Activated naive CD4-positive, alpha-beta T cell treated with anti-CD3 and anti-CD28 coated beads for 36 hours (primary cell): ENCODE measurements at regions of chr4 and their contacts with region 1.

Region 1: DNA sequence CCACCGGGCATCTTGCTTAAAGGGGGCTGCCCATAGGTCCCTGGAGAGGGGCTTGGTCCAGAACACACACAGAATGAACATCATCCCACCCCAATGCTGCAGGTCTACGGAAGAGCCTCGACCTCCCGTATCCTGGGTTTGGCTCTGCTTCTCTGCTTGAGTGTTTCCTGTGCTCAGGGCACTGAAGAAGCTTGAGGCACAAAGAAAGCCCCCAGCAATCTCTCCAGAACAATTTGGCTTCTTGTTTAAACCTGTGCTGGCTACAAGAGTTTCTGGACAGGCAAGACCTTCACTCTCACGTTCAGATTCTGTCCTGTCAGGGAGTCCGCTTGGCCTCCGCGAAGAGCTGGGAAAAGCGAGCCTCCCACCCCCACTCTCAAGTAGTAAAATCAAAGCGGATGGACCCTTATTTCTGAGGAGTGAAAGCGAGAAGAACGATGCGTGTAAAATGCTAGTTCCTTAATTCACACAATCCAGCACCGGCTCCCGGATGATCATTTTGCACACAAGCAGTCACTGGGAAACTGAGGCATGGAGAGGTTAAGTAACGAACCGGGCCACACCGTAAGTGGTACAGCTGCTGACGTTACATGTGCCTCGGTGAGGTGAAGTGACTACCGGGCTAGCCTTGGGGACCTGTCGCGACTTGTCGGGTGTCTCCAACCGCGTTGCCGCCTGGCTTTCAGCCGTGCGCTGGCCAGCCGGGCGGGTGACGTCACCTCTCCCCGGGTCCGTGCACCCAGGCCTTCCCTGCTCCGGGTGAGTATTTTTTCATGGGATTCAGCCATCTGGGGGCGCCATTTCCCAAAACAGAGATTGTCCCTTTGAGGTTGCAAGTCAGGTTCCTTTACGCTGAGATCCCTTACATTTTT is 3.1 kb upstream of the SFRP2 start:
- DNase-seq: peak; percentile 85
- H3K4me3 Mint-ChIP-seq: peak overlapping the region; percentile 67
- H3K27ac Mint-ChIP-seq: no peak overlapping the region
- H3K4me1 Mint-ChIP-seq: peaks cover 44% of the 10 kb centered on the region
- H3K27me3 Mint-ChIP-seq: peaks cover 79% of the 10 kb centered on the region

Region 2: GRCh38 chr4:152972821-152973628 is 819.0 kb before region 1 on chr4:
- CTCF ChIA-PET with region 1: no interaction called
- intact Hi-C with region 1: no loop called
- DNase-seq: no peak
- H3K4me3 Mint-ChIP-seq: no peak overlapping the region
- H3K27ac Mint-ChIP-seq: no peak overlapping the region
- H3K4me1 Mint-ChIP-seq: no peaks in the 10 kb centered on the region
- H3K27me3 Mint-ChIP-seq: no peaks in the 10 kb centered on the region

Region 3: DNA sequence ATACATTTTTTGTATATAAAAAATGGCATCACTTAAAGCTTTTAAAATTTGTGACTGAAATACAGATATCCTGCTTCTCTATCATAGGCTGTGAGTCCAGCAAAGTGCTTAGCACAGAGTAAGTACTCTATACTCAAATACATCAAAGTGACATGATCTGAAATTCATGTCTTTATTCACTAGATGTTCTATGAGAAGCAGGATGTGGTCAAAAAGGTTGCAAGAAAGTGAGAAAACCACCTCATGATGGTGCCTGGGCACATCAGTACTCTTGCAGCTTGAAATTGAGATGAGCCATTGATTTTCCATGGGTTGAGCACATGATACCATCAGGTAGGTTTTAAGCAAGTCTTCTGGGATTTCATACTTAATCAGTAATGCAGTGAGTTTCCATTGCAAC is 17.3 kb after region 1 on chr4:
- CTCF ChIA-PET with region 1: interaction called, 3 read pairs
- intact Hi-C with region 1: loop called (anchors 1 kb)
- DNase-seq: peak; percentile 59
- H3K4me3 Mint-ChIP-seq: no peak overlapping the region
- H3K27ac Mint-ChIP-seq: no peak overlapping the region
- H3K4me1 Mint-ChIP-seq: peaks cover 17% of the 10 kb centered on the region
- H3K27me3 Mint-ChIP-seq: no peaks in the 10 kb centered on the region

Region 4: DNA sequence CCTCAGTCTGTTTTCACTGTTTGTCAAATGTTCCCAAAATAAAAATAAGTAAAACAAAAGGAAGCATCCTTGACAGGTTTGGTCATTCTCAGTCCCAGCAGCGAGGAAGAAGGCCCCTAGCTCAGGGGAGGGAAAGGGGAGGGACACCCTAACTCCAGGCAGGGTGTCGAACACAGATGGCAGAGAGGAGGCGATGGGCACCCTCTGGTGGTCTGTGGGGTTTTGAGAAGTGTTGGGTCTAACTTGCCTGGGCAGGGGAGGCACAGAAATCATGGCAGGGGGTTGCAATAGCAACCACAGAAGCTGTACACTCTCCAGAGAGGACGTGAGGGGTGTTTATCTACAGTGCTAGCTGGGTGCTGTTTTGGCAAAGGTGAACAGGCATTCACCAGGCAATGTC is 226.7 kb after region 1 on chr4:
- CTCF ChIA-PET with region 1: interaction called, 14 read pairs
- intact Hi-C with region 1: loop called (anchors 1 kb)
- DNase-seq: peak; percentile 57
- H3K4me3 Mint-ChIP-seq: no peak overlapping the region
- H3K27ac Mint-ChIP-seq: no peak overlapping the region
- H3K4me1 Mint-ChIP-seq: no peaks in the 10 kb centered on the region
- H3K27me3 Mint-ChIP-seq: peaks cover 5% of the 10 kb centered on the region

Region 5: DNA sequence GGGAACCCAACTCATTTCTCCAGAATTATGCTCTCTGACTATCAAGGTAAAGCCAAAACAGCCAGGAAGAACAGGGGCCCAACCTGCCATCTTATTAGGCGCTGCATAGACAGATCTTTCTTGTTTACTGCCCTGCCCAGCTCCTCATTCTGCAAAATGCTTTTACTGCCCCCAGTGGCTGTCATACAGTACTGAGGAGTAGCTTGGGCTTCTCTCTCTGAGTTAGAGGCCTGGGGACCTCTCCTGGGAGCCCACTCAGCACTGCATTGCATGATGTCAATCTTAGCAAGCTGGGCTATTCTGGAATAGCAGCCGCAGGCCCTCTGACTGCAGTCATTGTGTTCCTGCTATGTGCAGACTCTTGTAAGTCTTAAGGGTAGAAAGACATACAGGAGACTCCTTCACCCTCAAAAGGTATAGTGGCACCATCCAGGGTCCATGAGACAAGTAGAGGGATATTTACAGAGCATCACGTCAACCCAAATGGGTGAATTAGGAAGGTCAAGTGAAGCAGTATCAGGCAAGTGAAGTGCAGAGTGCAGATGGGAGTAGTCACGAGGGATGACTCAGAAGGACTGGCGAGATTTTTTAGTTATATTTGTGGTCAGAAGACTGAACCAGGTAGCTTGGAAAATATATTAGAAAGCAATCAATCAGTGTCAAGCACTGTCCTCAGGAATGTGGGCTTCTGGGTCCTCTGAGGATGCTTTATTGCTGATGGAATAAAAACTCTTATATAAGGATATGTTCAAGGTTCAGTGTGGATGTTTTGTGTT is 291.0 kb after region 1 on chr4:
- CTCF ChIA-PET with region 1: interaction called, 4 read pairs
- intact Hi-C with region 1: loop called (anchors 5 kb)
- DNase-seq: peak; percentile 22
- H3K4me3 Mint-ChIP-seq: no peak overlapping the region
- H3K27ac Mint-ChIP-seq: no peak overlapping the region
- H3K4me1 Mint-ChIP-seq: no peaks in the 10 kb centered on the region
- H3K27me3 Mint-ChIP-seq: peaks cover 2% of the 10 kb centered on the region

Region 6: DNA sequence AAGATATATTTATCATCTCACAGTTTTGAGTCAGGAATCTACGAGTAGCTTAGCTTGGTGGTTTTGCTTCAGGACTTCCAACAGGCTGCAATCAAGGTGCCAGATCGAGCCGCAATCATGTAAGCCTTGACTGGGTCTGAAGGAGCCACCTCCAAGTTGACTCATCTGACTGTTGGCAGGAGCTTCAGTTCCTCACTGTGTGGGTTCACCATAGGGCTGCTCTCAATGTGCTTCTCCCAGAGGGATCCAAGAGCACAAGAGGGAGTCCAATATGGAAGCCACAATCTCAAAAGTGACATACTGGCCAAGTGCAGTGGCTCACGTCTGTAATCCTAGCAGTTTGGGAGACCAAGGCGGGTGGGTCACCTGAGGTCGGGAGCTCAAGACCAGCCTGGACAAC is 673.1 kb after region 1 on chr4:
- CTCF ChIA-PET with region 1: no interaction called
- intact Hi-C with region 1: no loop called
- DNase-seq: no peak
- H3K4me3 Mint-ChIP-seq: no peak overlapping the region
- H3K27ac Mint-ChIP-seq: no peak overlapping the region
- H3K4me1 Mint-ChIP-seq: no peaks in the 10 kb centered on the region
- H3K27me3 Mint-ChIP-seq: peaks cover 13% of the 10 kb centered on the region